Right ventricle myocardium superior (tissue), 1 donor: ENCODE measurements at regions of chr11 and their contacts with region 1.

Region 1: DNA sequence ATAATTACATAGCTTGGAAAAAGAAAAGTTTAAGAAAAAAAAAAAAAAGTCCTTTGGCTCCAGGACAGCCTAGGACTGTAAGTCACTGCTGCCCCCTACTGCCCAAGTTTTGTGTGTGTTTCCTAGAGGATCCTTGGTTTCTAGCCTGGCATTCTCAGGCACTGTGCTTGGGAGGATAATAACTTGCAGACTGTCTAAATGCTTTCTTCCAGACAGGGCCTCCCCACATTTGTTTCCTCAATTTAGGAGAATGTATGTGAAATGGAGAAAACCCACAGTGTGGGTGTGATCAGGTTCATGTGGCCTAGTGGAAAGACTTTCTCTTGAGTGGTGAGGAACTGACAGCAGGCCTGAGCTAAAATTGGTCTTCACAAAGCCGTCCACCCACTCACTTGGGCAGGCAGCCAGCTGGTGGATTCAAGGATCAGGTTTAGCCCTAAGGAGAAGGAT is 191.0 kb downstream of the NAV2 start:
- DNase-seq: peak; percentile 67
- ATAC-seq: peak; percentile 78

Region 2: GRCh38 chr11:19561011-19561410 is 342.6 kb before region 1 on chr11:
- intact Hi-C with region 1: loop called (anchors 2 kb)
- DNase-seq: no peak
- ATAC-seq: no peak

Region 3: GRCh38 chr11:19742588-19743292 is 160.9 kb before region 1 on chr11:
- intact Hi-C with region 1: loop called (anchors 10 kb)
- DNase-seq: peak; percentile 86
- ATAC-seq: peak; percentile 91

Region 4: DNA sequence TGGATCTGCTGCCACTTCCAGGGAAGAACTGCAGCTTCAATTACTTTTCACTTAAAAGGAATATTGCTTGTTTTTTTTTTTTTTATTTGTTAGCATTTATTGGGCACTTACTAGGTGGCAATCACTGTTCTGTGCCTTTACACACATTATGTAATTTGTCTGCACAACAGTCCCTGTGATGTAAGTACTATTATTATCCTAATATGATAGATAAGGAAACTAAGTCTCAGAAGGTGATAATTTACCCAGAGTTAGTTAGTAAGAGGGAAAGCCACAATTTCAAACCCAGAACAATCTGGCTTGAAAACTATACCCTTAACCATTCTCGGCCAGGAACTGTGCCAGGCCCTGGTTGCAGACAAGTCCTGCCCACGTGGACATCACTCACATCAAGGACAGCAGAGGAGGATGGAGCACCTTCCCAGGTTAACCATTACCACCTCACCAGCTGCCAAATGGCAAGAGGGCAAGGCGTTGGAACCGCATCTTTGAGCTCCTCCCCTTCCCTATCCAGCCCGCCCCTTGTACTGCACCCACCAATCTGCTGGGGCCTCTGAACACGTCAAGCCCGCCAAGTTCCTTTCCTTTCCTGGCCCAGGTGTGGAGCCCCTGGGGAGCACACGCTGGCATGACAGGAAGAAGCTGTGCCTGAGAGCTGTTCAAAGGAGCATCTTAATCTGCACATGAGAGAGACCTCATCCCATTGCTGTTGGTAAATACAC is 112.7 kb before region 1 on chr11:
- intact Hi-C with region 1: loop called (anchors 10 kb)
- DNase-seq: no peak
- ATAC-seq: no peak